Head of caudate nucleus (tissue), 42 donors: ENCODE measurements at regions of chr6 and their contacts with region 1.

Region 1: GRCh38 chr6:34284563-34285447 is 36.0 kb upstream of the SMIM29 start:
- DNase-seq: peak; percentile 17 to 81 (median 56)

Region 2: GRCh38 chr6:34392497-34393190 is 107.8 kb after region 1 on chr6 and contains the start of gene NUDT3:
- intact Hi-C with region 1: loop called (anchors 10 kb)
- DNase-seq: peak; percentile 85 to 98 (median 94)